Ascending aorta (tissue), 2 donors: ENCODE measurements at regions of chr4 and their contacts with region 1.

Region 1: GRCh38 chr4:137370206-137370633 is 162.1 kb downstream of the PCDH18 start:
- DNase-seq: no peak
- H3K4me3 ChIP-seq: no peak overlapping the region
- H3K27ac ChIP-seq: peak overlapping the region; percentile 8 to 32
- H3K4me1 ChIP-seq: peaks cover 0 to 14% of the 10 kb centered on the region in 2 donors
- H3K27me3 ChIP-seq: no peaks in the 10 kb centered on the region
- CTCF ChIP-seq: no peak

Region 2: DNA sequence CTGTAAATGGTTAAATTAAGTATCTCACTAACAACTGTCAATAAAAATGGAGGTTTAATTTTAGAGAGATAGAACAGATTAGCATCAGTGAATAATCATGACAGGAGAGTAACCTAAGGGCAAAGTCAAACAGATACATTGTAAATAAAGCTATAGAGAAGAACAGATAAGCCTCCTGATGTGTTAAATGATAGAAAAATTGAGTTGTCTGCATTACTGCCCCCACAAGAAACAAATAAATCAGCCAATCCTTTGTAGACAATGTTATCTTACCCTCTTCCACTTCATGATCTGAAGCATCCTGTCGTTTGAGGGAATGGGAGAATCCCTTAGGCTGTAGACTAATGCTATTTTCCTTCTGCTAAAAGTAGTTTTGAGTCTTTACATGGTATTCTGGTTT is 14.3 kb after region 1 on chr4:
- intact Hi-C with region 1: no loop called
- DNase-seq: no peak
- H3K4me3 ChIP-seq: no peak overlapping the region
- H3K27ac ChIP-seq: no peak overlapping the region
- H3K4me1 ChIP-seq: no peaks in the 10 kb centered on the region
- H3K27me3 ChIP-seq: no peaks in the 10 kb centered on the region
- CTCF ChIP-seq: no peak

Region 3: DNA sequence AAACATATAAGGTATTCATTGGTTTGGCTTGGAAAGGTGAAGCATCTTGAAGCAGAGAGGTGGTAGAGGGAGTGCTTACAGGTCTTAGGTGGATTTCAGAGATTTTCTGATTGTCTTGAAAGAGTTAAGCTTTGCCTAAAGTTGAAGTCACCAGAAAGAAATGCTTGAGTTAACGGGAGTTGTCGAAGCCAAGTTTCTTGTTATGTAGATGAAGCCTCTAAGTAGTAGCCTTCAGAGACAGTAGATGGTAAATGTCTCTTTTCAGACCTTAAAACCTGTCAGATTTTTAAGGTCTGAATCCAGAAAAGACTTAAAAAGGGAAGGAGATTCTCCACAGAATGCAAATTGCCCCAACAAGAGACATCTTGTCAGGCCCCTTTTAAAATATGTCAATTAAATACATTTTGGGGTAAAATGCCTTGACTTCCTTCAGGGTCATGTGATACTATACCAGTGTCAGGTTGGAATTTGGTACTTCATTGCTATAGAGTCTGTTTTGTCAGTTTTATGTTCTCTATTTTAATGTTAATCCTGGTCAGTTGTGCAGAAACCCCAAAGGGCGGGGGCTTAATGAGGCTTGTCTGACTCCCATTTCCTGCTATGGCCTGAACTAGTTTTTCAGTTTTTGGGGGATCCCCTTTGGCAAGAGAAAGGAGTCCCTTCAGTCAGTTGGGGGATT is 81.1 kb after region 1 on chr4:
- intact Hi-C with region 1: no loop called
- DNase-seq: no peak
- H3K4me3 ChIP-seq: no peak overlapping the region
- H3K27ac ChIP-seq: no peak overlapping the region
- H3K4me1 ChIP-seq: no peaks in the 10 kb centered on the region
- H3K27me3 ChIP-seq: no peaks in the 10 kb centered on the region
- CTCF ChIP-seq: no peak

Region 4: DNA sequence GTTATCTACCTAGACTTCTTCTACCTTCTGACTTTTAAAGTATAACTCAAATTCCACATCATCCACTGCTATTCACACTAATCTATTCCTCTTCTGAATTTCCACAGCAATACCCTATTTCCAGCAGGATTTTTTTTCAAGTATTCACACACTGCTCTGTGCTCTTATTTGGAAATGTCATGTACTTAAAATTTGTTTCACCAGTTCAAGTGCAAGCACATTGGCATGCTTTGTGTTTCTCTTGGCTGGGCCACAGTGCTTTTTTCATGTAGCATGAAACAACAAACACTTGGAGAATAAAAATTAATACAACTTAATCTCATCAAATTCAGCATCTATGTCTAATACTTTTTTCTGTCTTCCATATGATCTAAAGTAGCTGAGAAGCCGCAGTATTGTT is 323.9 kb after region 1 on chr4:
- intact Hi-C with region 1: loop called (anchors 10 kb)
- DNase-seq: peak in 1 of 2 donors; percentile 73
- H3K4me3 ChIP-seq: peak overlapping the region in 1 of 2 donors; percentile 2
- H3K27ac ChIP-seq: peak overlapping the region; percentile 52 to 59
- H3K4me1 ChIP-seq: peaks cover 0 to 2% of the 10 kb centered on the region in 2 donors
- H3K27me3 ChIP-seq: no peaks in the 10 kb centered on the region
- CTCF ChIP-seq: no peak